ENCODE measurements at regions of chr2 and their contacts with region 1.

Region 1: DNA sequence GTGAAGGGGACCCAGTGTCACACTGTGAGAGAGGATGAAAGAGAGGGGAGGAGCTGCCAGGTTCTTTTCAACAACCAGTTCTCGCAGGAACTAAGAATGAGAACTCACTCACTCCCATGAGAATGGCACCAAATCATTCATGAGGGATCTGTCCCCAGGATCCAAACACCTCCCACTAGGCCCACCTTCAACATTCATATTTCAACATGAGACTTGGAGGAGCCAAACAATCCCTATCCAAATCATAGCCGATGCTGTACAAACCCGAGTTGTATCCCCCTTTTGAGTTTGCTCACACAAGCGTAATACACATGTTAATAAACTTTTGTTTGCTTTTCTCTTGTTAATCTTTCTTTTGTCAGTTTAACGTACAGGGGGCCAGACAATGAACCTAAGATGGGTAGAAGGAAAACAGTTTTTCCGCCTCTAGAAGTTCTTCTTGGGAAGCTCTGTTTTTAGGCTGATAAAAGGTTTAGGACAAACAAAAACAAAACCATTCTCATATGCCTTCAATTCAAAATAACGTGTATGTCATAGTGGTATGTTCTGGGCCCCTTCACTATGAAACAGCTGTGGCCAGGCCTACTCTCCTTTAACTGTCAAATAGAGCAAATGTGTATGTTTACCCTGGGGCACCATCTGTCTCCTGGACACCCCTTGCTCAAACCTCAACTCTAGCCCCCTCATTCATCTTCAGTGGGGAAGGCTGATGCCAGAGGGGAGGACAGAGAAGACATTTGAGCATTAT is 9.1 kb upstream of the TMEM37 start:
- DNase-seq: no peak
- ATAC-seq: no peak

Region 2: GRCh38 chr2:119678998-119679710 is 256.6 kb after region 1 on chr2 and contains the start of gene TMEM177:
- intact Hi-C with region 1: loop called in 1 of 2 experiments (anchors 5 kb)
- DNase-seq: peak; percentile 88 to 93
- ATAC-seq: peak; percentile 88
- total RNA-seq, gene TMEM177: 18.6 to 20.1 TPM